Right ventricle myocardium inferior (tissue), 1 donor: ENCODE measurements at regions of chr10 and their contacts with region 1.

Region 1: DNA sequence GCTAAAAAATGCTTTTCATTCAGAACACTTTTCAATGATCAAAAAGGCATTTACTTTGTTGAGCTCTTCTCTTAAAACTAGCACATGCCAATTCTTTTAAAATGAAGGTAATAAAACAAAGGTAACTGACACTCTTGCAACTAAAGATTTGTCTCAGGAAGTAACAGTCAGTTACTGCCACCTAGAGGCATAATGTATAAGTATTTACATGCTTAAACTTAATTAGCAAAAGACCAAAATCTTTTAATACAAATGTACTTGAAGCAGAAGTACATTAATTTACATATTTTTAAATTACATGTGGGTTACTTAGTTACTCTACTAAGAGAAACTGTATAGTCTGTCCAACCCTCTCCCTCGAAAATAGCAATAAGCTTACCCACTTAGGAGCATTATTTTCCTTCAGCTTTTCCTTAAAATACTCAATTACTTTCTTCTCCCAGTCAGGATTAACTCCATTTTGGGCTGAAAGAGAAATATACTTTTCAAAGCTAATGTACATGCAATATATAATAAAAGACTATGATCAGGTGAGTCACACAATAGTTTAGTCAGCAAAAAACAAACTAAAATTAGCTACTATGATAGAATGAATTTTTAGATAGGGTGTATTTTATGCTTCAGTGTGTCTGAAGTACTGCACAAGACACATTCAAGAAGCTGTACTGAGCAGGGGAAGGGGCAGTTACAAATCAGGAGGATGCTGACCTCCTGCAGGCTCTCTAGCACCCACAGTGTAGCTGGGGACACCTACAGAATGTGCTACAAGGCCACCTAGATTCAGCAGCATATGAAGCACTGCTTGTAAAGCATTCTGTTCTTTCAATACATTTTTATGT is 13.0 kb downstream of the MCMBP start:
- DNase-seq: no peak
- ATAC-seq: no peak

Region 2: DNA sequence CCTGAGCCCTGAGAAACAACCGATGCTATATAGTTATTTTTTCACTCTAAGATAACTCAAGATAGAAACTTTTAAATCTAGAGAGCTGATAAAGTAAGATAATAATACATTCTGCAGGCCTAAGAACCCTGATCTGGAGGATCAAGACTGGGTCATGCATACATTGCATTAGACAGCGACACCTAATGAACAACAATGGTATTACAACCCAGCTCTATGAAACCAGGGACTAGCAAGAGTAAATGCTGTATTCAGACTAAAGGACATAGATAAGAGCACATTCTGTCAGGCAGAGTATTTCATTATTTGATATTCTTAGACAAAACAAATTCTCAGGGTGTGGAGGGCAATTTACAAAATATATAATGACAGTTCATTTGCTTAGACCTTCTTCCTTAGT is 503.7 kb before region 1 on chr10:
- intact Hi-C with region 1: no loop called
- DNase-seq: no peak
- ATAC-seq: no peak

Region 3: DNA sequence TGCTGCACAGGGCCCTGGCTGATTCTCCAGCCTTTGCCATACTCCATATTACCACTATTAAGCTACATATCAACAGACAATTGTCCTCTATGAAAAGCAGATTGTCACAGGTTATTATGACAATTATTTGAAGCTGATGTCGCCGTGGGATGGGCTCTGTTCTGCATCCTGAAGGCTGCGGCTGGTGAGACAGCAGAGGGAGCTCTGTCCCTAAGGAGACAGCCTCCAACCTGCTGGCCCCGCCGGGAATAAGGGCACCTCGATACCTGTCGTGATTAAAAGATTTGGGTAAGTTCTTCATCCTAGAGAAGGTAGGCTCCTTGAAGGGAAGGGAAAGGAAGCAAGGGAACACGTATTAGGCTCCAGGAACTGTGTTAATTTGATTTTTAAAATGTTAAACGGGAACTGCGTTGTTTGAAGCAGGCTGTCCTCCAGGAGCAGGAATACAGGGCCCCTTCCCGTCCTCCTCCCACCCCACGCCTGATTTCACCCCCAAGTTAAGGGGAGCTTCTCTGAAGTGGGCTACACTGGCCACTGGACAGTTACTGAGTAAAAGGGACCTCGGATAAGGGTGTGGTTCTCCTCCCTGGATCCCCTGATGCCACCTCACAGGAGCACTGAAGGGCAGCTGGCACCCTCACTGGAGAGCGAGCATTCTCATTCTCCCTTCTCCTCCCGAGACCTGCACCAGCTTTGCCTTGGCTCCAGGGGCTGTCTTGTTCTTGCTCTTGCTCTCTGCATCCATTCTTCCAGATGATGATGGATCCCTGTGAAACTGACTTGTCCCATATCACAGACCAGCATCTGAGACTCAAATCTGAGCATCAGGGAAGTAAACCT is 251.1 kb before region 1 on chr10:
- intact Hi-C with region 1: loop called (anchors 2 kb)
- DNase-seq: peak; percentile 70
- ATAC-seq: peak; percentile 65

Region 4: GRCh38 chr10:119686439-119687191 is 173.0 kb before region 1 on chr10:
- intact Hi-C with region 1: loop called (anchors 1 kb)
- DNase-seq: peak; percentile 89
- ATAC-seq: peak; percentile 85

Region 5: DNA sequence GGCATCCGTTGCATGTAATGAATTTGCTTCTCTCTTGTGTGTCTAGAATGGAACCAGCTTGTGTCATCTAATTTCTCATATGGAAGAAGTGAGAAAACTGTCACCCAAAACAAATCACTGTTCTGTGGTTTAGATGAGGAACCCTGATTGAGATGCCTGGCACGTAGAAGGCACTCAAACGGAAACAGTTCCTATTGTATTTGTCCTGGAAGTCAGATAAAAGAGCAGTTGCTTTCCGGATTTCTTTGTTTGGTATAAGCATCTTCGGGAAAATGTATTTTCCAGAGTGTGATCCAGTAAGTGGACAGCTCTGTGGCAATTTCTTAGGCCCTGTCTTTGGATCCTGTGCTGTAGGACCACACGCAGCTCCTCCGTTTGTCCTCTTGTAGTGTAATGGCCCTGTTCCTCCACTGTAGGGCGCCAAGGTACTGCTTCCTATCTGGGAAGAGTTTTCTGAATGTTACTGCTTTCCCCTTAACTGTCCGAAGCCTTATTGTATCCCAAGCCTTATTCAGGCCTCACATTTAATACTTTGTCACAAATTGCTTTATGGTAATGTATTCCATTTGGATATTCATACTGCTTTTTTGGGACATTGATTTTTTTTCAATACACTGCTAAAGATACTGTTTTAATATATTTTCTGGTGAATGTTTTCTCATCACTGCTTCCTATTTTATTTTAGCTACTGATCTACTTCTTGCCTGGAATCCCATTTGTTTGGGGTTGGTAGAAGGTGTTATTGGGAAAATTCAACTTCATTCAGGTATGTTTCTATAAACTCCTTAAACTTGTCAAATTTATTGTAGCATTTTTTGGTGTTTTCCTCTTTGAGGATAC is 109.0 kb before region 1 on chr10:
- intact Hi-C with region 1: loop called (anchors 5 kb)
- DNase-seq: no peak
- ATAC-seq: peak; percentile 95

Region 6: DNA sequence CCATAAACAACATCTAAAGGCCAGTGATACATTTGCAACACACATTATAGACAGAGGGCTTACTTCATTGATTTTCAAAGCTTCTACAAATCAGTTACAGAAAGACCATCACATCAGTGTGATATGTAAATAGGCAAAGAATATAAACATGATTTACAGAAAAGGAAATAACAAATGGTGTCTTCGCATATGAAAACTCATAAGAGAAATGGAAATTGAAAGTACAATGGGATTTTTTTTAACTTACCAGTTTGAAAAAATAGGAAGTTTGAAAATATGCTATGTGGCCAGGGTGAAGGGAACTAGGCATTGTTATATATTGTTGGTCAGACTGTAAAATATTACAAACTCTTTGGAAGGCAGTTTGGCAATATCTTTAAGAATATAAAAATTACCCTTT is 60.2 kb after region 1 on chr10:
- intact Hi-C with region 1: no loop called
- DNase-seq: no peak
- ATAC-seq: no peak